ENCODE measurements at regions of chr6 and their contacts with region 1.

Region 1: GRCh38 chr6:154276810-154277628 is 79.6 kb downstream of the IPCEF1 start:
- DNase-seq: no peak
- ATAC-seq: no peak
- H3K4me3 ChIP-seq: no peak overlapping the region
- H3K27ac ChIP-seq: no peak overlapping the region
- H3K4me1 ChIP-seq: no peaks in the 10 kb centered on the region
- H3K27me3 ChIP-seq: no peaks in the 10 kb centered on the region
- CTCF ChIP-seq: peak; percentile 43 to 77 (median 67)
- POLR2A ChIP-seq: no peak

Region 2: GRCh38 chr6:154156135-154156896 is 120.7 kb before region 1 on chr6:
- intact Hi-C with region 1: loop called (anchors 5 kb)
- DNase-seq: peak; percentile 29 to 62 (median 52)
- ATAC-seq: peak; percentile 66
- H3K4me3 ChIP-seq: no peak overlapping the region
- H3K27ac ChIP-seq: peak overlapping the region in 3 of 4 donors; percentile 24 to 50 (median 37)
- H3K4me1 ChIP-seq: peaks cover 7% of the 10 kb centered on the region
- H3K27me3 ChIP-seq: no peaks in the 10 kb centered on the region
- CTCF ChIP-seq: peak in 6 of 7 experiments; percentile 10 to 54 (median 31)
- POLR2A ChIP-seq: no peak

Region 3: GRCh38 chr6:154197196-154197860 is 79.7 kb before region 1 on chr6:
- intact Hi-C with region 1: no loop called
- DNase-seq: no peak
- ATAC-seq: no peak
- H3K4me3 ChIP-seq: no peak overlapping the region
- H3K27ac ChIP-seq: no peak overlapping the region
- H3K4me1 ChIP-seq: no peaks in the 10 kb centered on the region
- H3K27me3 ChIP-seq: no peaks in the 10 kb centered on the region
- CTCF ChIP-seq: no peak
- POLR2A ChIP-seq: no peak

Region 4: DNA sequence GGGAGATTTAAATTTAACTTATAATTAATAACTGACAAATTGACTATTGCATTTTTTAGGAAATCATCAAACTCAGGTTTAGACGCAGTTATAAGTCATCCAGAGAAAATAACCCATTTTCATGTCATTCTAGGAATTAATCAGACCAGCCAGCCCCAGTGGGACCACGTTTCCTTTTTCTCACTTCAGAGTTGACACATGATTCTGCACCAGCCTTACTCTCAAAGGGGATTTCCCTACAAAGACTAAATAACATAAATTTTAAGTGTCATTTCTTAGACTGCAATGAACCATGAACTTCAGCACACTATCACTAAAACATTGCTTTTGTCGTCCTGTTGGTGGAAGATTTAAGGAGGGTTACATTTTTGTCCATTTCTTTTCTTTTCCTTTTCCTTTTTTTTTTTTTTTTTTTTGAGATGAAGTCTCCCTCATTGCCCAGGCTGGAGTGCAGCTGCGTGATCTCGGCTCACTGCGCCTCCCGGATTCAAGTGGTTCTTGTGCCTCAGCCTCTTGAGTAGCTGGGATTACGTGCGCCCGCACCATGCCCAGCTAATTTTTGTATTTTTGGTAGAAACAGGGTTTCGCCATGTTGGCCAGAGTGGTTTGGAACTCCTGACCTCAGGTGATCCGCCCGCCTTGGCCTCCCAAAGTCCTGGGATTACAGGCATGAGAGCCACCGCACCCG is 76.0 kb after region 1 on chr6:
- intact Hi-C with region 1: no loop called
- DNase-seq: no peak
- ATAC-seq: no peak
- H3K4me3 ChIP-seq: no peak overlapping the region
- H3K27ac ChIP-seq: no peak overlapping the region
- H3K4me1 ChIP-seq: no peaks in the 10 kb centered on the region
- H3K27me3 ChIP-seq: no peaks in the 10 kb centered on the region
- CTCF ChIP-seq: no peak
- POLR2A ChIP-seq: no peak